ENCODE measurements at regions of chr9 and their contacts with region 1.

Region 1: GRCh38 chr9:75001719-75002422 is 26.2 kb downstream of the CARNMT1 start:
- DNase-seq: peak; percentile 48
- H3K4me3 ChIP-seq: no peak overlapping the region
- H3K27ac ChIP-seq: peak overlapping the region; percentile 14
- H3K4me1 ChIP-seq: no peaks in the 10 kb centered on the region
- H3K27me3 ChIP-seq: no peaks in the 10 kb centered on the region
- CTCF ChIP-seq: peak; percentile 79

Region 2: GRCh38 chr9:74773886-74774479 is 227.9 kb before region 1 on chr9:
- intact Hi-C with region 1: loop called (anchors 2 kb)
- DNase-seq: peak; percentile 86
- H3K4me3 ChIP-seq: no peak overlapping the region
- H3K27ac ChIP-seq: no peak overlapping the region
- H3K4me1 ChIP-seq: no peaks in the 10 kb centered on the region
- H3K27me3 ChIP-seq: no peaks in the 10 kb centered on the region
- CTCF ChIP-seq: peak; percentile 91

Region 3: GRCh38 chr9:75053869-75054268 is 52.0 kb after region 1 on chr9:
- intact Hi-C with region 1: no loop called
- DNase-seq: no peak
- H3K4me3 ChIP-seq: no peak overlapping the region
- H3K27ac ChIP-seq: no peak overlapping the region
- H3K4me1 ChIP-seq: no peaks in the 10 kb centered on the region
- H3K27me3 ChIP-seq: no peaks in the 10 kb centered on the region
- CTCF ChIP-seq: no peak

Measured in colonic mucosa (tissue), 4 donors.